ENCODE measurements at regions of chr15 and their contacts with region 1.

Region 1: DNA sequence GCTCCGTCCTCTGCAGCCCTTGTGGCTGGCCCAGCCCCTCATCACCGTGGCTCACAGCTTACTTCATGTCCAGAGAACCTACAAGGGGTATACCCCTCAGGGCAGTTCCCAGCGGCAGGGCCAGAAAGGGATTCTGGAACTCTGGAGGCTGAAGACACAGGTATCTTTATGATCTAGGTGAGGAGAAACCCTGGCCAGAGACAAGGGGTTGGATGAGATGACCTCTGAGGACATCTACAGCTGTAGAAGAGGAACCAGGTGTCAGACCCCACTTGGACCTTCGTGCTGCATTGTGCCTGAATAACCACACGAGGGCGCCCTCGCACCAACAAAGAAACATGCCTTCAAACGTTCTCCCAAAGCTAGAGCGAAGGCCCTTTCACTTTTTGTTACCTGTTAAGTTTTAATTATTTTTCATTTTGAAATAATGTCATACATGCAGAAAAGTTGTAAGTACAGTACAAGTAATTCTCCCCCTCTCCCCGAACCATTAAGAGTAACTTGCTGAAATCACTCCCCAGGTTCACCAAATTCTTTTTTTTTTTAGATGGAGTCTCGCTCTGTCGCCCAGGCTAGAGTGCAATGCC is 118.7 kb upstream of the SMAD3 start:
- DNase-seq: peak; percentile 81
- ATAC-seq: peak; percentile 77
- H3K4me3 Mint-ChIP-seq: no peak overlapping the region
- H3K27ac Mint-ChIP-seq: no peak overlapping the region
- H3K4me1 Mint-ChIP-seq: peaks cover 12% of the 10 kb centered on the region
- H3K27me3 Mint-ChIP-seq: peaks cover 15% of the 10 kb centered on the region

Region 2: DNA sequence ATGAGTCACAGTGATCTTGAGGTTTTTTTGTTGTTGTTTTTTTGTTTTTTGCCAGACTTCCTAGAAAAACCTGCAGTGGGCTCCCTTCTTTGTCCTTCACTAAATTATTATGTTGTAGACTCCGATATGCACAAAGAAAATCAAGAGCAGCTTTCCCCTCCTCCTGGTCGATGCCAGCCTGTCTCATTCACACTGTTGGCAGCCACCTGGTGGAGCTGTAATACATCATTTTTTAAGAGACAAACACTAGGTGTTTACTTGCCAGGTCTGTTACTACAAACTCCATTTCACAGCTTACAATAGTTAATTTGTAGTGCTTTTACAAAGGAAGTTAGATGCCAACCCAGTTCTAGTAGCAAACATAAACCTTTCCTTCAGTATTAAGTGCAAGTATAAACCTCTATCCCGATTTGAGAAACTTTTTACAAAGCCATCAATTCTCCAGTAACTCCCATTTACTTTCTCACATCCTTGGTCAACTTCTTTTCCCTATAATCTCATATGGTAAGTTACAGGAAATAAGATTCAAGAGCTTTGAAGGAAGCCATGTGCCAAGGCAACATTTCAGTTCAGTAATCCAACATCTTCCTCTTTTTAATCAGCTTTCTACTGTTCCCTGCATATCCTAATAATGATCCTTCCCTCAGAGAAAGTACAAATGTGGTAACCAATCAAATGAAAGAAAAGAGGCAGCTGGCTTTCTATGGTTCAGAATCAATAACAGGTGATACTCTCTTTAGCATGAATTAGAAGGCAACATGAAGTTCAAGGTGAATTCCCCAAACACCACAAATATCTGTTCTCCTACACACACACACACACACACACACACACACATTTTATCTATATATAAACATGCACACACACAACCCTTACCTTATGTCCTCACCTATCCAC is 293.8 kb after region 1 on chr15:
- CTCF ChIA-PET with region 1: interaction called, 16 read pairs
- DNase-seq: peak; percentile 56
- ATAC-seq: peak; percentile 48
- H3K4me3 Mint-ChIP-seq: peak overlapping the region; percentile 56
- H3K27ac Mint-ChIP-seq: peak overlapping the region; percentile 87
- H3K4me1 Mint-ChIP-seq: peaks cover 47% of the 10 kb centered on the region
- H3K27me3 Mint-ChIP-seq: no peaks in the 10 kb centered on the region

Region 3: GRCh38 chr15:67433495-67434099 is 486.9 kb after region 1 on chr15:
- CTCF ChIA-PET with region 1: interaction called, 14 read pairs
- DNase-seq: no peak
- ATAC-seq: peak; percentile 47
- H3K4me3 Mint-ChIP-seq: no peak overlapping the region
- H3K27ac Mint-ChIP-seq: no peak overlapping the region
- H3K4me1 Mint-ChIP-seq: no peaks in the 10 kb centered on the region
- H3K27me3 Mint-ChIP-seq: no peaks in the 10 kb centered on the region

Measured in activated CD8-positive, alpha-beta memory T cell treated with anti-CD3 and anti-CD28 coated beads, Interleukin-2, amount 10 ng/mL, durations not matched to agents 7 days and 5 days (primary cell).